ENCODE measurements at regions of chr3 and their contacts with region 1.

Region 1: GRCh38 chr3:116863822-116864589 is 154.4 kb downstream of the TUSC7 start:
- DNase-seq: no peak
- H3K4me3 ChIP-seq: peak overlapping the region; percentile 57 to 60
- H3K27ac ChIP-seq: no peak overlapping the region
- H3K4me1 ChIP-seq: no peaks in the 10 kb centered on the region
- H3K27me3 ChIP-seq: no peaks in the 10 kb centered on the region
- CTCF ChIP-seq: peak; percentile 28 to 69 (median 57)

Region 2: GRCh38 chr3:117019082-117019713 is 155.2 kb after region 1 on chr3:
- intact Hi-C with region 1: loop called (anchors 5 kb)
- DNase-seq: peak in 1 of 2 donors; percentile 74
- H3K4me3 ChIP-seq: peak overlapping the region in 1 of 2 donors; percentile 42
- H3K27ac ChIP-seq: no peak overlapping the region
- H3K4me1 ChIP-seq: no peaks in the 10 kb centered on the region
- H3K27me3 ChIP-seq: no peaks in the 10 kb centered on the region
- CTCF ChIP-seq: peak; percentile 60 to 83 (median 74)

Region 3: DNA sequence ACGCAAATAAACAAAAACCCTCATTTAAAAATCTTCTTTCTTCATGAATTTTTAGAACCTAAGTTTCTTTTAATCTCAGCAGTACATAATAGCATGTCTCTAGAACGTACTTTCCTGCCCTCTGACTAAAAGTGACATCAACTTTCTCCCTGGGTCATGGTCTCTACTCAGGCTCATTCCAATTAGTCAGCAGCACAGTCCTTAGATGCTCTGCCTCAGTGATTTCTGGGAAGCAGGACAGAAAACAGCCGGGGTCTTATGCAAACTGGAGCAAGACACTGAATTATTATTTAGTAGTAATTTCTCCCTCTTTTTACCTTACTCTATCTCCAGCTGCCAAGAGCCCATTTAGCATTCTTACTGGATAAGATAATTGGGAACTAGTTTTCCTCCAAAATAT is 210.8 kb after region 1 on chr3:
- intact Hi-C with region 1: loop called (anchors 10 kb)
- DNase-seq: no peak
- H3K4me3 ChIP-seq: no peak overlapping the region
- H3K27ac ChIP-seq: no peak overlapping the region
- H3K4me1 ChIP-seq: no peaks in the 10 kb centered on the region
- H3K27me3 ChIP-seq: no peaks in the 10 kb centered on the region
- CTCF ChIP-seq: no peak

Region 4: GRCh38 chr3:117417411-117417810 is 553.4 kb after region 1 on chr3:
- intact Hi-C with region 1: no loop called
- DNase-seq: no peak
- H3K4me3 ChIP-seq: no peak overlapping the region
- H3K27ac ChIP-seq: peak overlapping the region in 1 of 2 donors; percentile 25
- H3K4me1 ChIP-seq: no peaks in the 10 kb centered on the region
- H3K27me3 ChIP-seq: no peaks in the 10 kb centered on the region
- CTCF ChIP-seq: no peak

Region 5: DNA sequence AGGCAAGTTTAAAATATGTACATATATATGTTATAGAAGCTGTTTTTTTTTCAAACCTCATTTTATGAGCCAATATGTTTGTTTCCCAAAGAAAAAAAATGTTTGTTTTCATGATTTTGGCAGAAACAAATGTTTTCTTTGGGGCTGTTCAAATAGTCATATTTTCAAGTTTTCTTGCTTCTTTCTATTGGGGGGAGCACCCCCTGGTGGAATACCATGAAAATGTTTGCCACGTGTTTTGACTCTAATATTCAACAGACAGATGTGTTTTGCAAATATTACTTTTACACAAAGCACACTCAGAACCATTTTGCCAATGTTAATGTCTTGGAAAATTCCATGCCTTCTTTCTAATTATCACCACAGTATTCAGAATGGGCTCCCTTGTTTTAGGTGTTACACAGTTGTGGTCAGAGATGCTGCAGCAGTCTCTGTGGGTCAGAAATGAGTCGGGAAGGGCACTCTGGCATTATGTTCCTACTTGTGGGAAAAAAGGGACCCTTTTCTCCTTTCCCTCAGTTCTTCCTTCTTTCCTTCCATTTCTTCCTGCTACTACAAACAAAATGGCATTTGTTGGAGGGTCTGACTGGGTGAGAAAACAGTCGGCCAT is 662.6 kb after region 1 on chr3:
- intact Hi-C with region 1: loop called (anchors 5 kb)
- DNase-seq: no peak
- H3K4me3 ChIP-seq: no peak overlapping the region
- H3K27ac ChIP-seq: no peak overlapping the region
- H3K4me1 ChIP-seq: no peaks in the 10 kb centered on the region
- H3K27me3 ChIP-seq: no peaks in the 10 kb centered on the region
- CTCF ChIP-seq: peak; percentile 16 to 60 (median 46)

Region 6: GRCh38 chr3:117681619-117682018 is 817.6 kb after region 1 on chr3:
- intact Hi-C with region 1: no loop called
- DNase-seq: no peak
- H3K4me3 ChIP-seq: no peak overlapping the region
- H3K27ac ChIP-seq: no peak overlapping the region
- H3K4me1 ChIP-seq: no peaks in the 10 kb centered on the region
- H3K27me3 ChIP-seq: no peaks in the 10 kb centered on the region
- CTCF ChIP-seq: no peak

Region 7: GRCh38 chr3:117719316-117719926 is 855.4 kb after region 1 on chr3:
- intact Hi-C with region 1: loop called (anchors 5 kb)
- DNase-seq: no peak
- H3K4me3 ChIP-seq: no peak overlapping the region
- H3K27ac ChIP-seq: no peak overlapping the region
- H3K4me1 ChIP-seq: no peaks in the 10 kb centered on the region
- H3K27me3 ChIP-seq: no peaks in the 10 kb centered on the region
- CTCF ChIP-seq: peak in 2 of 3 experiments; percentile 59 to 67

Measured in ascending aorta (tissue), 2 donors.